AG04449 (cell line): ENCODE measurements at regions of chr16 and their contacts with region 1.

Region 1: DNA sequence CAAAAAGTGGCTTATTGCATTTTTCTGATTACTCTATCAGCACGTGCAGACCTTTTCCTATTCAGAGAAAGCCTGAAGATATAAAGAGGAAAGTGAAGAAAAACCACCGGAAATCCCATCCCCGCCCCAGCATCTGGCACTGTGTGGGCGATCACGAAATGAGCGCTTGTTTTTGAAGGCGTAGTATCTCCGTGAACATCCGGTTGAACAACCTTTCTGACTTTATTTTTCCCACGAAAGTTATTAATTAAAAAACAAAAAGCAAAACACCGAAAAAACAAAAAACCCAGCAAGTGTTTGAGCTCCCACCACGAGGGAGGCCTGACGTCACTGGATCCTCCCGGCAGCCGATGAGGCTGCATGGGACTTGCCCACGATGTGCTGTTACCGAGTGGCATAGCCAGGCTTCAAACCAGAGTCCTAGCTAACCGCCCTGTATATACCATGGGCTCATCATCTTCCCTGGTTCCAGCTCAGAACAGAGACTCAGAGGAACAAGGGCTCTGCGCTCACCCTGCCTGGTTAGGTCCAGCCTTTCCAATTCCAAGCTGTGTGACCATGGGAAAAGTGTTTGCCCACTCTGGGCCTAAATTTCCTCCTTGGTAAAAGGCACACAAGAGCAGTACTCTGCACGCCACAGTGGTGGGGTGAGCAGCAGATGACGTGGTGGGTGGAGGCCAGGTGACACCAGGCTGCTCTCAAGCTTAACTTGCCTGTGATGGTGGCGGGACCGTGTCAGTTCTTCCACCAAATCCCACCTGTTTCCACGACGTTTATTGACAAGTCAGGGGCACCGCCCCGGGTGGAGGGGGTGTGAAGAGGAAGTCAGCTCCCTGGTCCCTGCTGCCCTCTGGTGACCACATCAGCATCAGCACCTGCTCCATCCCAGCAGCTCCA is 34.3 kb upstream of the IL21R start:
- DNase-seq: no peak
- H3K4me3 ChIP-seq: peak overlapping the region; percentile 27
- CTCF ChIP-seq: peak; percentile 95

Region 2: GRCh38 chr16:27154705-27155521 is 212.8 kb before region 1 on chr16:
- CTCF ChIA-PET with region 1: interaction called, 129 read pairs
- POLR2A ChIA-PET with region 1: no interaction called
- DNase-seq: no peak
- H3K4me3 ChIP-seq: no peak overlapping the region
- CTCF ChIP-seq: peak; percentile 95

Region 3: DNA sequence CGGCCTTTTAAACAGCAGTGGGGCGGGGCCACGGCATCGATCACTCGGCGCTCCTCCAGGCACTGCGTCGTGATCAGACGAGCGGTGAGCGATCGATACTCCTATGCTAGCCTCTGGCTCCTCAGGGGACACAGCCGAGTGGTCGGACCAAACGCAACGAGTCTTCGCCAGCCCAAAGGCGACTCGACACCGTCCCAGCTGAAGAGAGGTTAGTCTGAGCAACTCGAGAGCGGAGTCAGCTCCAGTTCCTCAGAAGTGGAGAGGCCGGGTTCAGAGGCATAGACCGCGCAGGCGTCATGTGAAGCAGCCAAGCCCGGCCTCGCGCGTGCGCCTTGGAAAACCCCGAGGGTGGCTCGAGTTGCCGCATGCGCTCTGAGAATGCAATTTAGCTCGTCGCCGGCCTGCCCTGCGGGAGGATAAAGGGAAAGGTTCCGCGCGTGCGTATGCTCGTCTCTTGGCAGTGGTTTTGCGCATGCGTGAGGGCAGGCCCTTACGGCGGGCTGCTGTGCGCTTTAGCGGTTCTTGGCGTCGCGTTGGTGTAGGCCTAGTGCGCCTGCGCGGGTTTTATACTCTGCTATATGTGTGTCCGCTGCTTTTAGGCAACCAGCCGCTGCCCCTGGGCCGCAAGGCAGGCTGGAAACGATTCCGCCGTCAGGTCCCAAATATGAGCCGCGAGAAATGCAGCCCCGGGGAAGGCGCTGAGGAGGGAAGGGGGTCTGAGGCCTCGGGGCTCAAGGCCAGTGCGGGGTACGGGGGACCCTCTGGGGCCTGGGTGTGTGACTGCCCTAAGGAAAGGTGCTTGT is 164.1 kb before region 1 on chr16 and contains the start of gene KDM8:
- CTCF ChIA-PET with region 1: interaction called, 11 read pairs
- POLR2A ChIA-PET with region 1: no interaction called
- DNase-seq: peak; percentile 96
- H3K4me3 ChIP-seq: peak within 1 kb of the TSS; percentile 99
- CTCF ChIP-seq: no peak

Region 4: DNA sequence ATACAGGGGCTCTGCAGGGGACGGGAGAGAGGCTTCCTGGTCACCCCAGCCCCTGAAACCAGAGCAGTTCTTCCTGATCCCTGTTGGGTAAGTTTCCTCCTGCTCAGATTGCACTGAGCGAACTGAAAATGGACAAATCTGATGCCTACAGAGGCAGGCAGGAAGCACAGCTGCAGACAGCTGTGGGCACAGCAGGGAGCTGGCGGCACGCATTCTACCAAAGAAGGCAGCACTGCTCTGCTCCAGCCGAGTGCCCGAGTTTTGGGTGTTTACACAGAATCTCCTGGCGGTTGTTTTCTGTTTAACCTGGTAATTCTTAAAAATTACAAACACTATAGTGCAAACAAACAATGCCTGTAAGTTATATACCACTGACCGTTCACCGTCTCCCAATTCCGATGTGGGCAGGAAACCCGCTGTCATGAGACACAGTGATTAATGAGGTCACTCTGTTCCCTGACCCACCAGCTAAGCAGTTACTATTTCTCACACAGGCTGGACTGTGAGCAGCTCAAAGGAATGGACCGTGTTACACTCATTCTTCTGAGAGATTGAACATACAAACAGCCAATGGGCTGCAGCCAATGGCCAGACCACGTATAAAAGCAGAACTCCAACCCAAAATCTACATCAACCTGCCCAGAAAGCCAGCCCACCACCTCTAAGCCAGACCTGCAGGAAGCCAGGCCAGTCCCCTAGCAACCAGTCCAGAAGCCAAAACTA is 124.7 kb before region 1 on chr16:
- CTCF ChIA-PET with region 1: interaction called, 355 read pairs
- POLR2A ChIA-PET with region 1: no interaction called
- DNase-seq: peak; percentile 41
- H3K4me3 ChIP-seq: peak overlapping the region; percentile 23
- CTCF ChIP-seq: no peak

Region 5: GRCh38 chr16:27355610-27356009 is 12.1 kb before region 1 on chr16:
- CTCF ChIA-PET with region 1: interaction called, 46 read pairs
- POLR2A ChIA-PET with region 1: no interaction called
- DNase-seq: no peak
- H3K4me3 ChIP-seq: no peak overlapping the region
- CTCF ChIP-seq: peak; percentile 40

Region 6: GRCh38 chr16:27890866-27891265 is 523.2 kb after region 1 on chr16:
- CTCF ChIA-PET with region 1: no interaction called
- POLR2A ChIA-PET with region 1: no interaction called
- DNase-seq: no peak
- H3K4me3 ChIP-seq: no peak overlapping the region
- CTCF ChIP-seq: no peak